ENCODE measurements at regions of chr9 and their contacts with region 1.

Region 1: DNA sequence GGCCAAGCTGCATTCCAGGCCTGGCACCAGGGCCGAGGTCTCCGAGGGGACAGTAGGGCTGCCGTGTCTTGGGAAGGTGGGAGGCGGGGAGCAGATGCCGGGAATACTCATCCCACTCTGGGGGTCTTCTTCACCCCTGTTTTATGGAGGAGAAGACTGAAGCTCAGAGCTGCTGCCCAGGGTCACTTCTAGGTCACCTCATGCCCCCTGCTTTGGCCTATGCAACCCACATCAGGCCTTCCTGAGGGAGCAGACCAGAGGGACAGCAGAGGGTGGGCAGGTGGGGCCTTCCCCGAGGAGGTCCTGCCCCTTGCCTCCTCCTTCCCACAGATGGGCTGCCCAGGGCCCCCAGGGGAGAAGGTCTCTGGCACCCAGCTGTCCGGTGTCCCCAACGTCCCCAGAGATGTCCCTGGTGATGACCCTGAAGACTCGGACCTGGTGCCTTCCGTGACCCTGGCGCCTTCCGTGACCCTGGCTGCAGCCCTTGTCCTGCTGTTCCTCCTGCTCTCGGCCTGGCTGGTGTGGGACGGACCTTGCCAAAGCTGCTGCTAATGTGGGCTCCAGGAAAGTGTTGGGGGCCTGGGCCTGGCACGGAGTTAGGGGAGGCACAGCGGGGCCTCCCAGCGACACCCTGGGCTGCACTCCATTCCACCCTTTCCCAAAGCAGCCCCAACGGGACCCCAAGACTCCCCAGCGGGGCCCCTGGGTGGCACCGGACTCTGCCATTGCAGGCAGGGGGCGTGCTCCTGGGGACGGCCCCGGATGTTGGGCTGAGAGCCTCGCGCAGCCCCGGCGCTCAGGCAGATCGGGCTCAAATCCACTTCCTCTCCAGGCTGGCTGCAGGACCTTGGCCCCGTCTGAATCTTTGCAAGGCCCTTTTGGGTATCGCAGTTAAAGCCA is 6.7 kb upstream of the SLC2A6 start:
- DNase-seq: no peak
- H3K4me3 ChIP-seq: no peak overlapping the region
- H3K27ac ChIP-seq: no peak overlapping the region
- H3K27me3 ChIP-seq: peaks cover 20% of the 10 kb centered on the region
- CTCF ChIP-seq: no peak

Region 2: GRCh38 chr9:133406480-133407307 is 78.9 kb before region 1 on chr9:
- CTCF ChIA-PET with region 1: interaction called, 13 read pairs
- POLR2A ChIA-PET with region 1: no interaction called
- DNase-seq: peak; percentile 47
- H3K4me3 ChIP-seq: no peak overlapping the region
- H3K27ac ChIP-seq: no peak overlapping the region
- H3K27me3 ChIP-seq: no peaks in the 10 kb centered on the region
- CTCF ChIP-seq: peak; percentile 93